ENCODE measurements at regions of chr17 and their contacts with region 1.

Region 1: DNA sequence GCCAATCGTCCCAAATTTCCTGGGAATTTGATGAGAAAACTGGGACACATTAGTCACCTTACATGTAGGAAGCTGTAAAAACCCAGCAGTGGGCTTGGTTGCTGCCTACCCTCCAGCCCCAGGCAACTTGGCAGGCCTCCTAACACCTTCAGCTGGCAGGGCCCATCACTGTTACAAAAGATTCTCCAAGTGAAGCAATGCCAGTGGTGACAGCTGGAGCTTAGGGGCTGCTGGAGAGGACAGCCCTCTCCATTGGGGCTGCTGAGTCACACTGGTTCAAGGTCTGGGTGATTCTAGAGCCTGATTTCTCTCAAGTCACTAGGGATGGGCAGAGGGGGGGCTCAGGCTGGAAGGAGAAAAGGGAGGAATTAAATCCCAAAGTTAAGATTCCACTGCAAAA is 180.6 kb downstream of the COPRS start:
- DNase-seq: peak in 2 of 5 donors; percentile 40 to 41
- ATAC-seq: peak in 3 of 4 donors; percentile 34 to 60 (median 57)
- H3K4me3 ChIP-seq: no peak overlapping the region
- H3K27ac ChIP-seq: no peak overlapping the region
- H3K4me1 ChIP-seq: peaks cover 0 to 10% (median 0%) of the 10 kb centered on the region in 12 donors
- H3K27me3 ChIP-seq: no peaks in the 10 kb centered on the region
- CTCF ChIP-seq: no peak
- POLR2A ChIP-seq: no peak

Region 2: GRCh38 chr17:31452101-31452500 is 226.3 kb before region 1 on chr17:
- intact Hi-C with region 1: no loop called
- DNase-seq: no peak
- ATAC-seq: no peak
- H3K4me3 ChIP-seq: no peak overlapping the region
- H3K27ac ChIP-seq: peak overlapping the region in 1 of 12 donors; percentile 31
- H3K4me1 ChIP-seq: peaks cover 0 to 12% (median 0%) of the 10 kb centered on the region in 12 donors
- H3K27me3 ChIP-seq: no peaks in the 10 kb centered on the region
- CTCF ChIP-seq: no peak
- POLR2A ChIP-seq: no peak

Region 3: DNA sequence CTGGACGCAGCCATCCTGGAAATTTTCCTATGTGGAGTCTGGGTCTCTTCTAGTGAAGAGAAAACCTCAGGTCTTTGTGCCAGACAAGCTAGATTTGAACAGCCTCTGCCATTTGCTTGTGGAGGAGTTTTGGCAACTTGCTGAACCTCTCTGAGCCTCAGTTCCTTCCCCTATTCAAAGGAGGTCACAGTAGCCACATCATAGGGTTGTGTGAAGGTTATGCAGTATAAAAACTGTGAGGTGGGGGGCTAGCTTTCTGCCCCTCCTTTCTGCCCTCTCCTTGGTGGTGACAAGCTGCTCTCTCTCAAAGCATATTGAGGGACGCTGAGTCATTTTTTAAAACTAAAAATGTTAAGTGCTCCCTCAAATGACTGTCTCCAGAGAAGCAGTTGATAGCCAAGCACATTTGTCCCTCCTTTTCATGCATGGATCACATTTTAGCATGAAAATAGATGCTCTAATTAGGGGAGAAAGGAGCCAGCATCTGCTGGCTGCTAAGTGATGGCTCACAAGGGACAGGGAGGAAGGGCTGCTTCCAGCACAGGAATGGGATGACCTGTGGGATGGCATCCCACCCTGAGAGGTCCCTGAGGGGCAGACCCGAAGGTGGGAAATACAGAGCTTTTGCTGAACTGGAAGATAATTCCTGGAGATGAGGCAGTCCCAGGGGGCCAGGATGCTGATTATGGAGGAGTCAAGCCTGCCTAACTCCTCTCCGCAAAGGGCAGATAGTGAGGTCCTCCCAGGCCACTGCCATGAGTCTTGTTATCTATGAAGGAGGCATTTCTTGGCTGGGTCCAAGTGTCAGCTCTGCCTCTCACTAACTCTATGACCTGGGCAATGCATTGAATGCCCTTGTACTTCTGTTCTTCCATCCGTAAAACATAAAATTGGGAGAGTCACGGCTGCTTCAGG is 68.2 kb before region 1 on chr17:
- intact Hi-C with region 1: no loop called
- DNase-seq: no peak
- ATAC-seq: no peak
- H3K4me3 ChIP-seq: no peak overlapping the region
- H3K27ac ChIP-seq: no peak overlapping the region
- H3K4me1 ChIP-seq: no peaks in the 10 kb centered on the region
- H3K27me3 ChIP-seq: no peaks in the 10 kb centered on the region
- CTCF ChIP-seq: no peak
- POLR2A ChIP-seq: no peak

Region 4: DNA sequence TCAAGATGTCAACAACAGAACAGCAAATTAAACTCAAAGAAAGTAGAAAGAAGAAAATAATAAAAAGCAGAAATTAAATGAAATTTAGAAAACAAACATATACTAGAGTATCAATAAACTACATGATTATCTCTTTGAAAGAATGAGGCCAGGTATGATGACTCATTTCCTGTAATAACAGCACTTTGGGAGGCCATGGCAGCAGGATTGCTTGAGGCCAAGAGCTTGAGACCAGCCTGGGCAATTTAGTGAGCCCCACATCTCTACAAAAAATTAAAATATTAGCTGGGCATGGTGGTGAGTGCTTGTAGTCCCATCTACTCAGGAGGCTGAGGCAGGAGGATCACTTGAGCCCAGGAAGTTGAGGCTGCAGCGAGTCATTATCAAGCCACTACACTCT is 54.4 kb before region 1 on chr17:
- intact Hi-C with region 1: no loop called
- DNase-seq: no peak
- ATAC-seq: no peak
- H3K4me3 ChIP-seq: no peak overlapping the region
- H3K27ac ChIP-seq: no peak overlapping the region
- H3K4me1 ChIP-seq: no peaks in the 10 kb centered on the region
- H3K27me3 ChIP-seq: no peaks in the 10 kb centered on the region
- CTCF ChIP-seq: no peak
- POLR2A ChIP-seq: no peak

Region 5: DNA sequence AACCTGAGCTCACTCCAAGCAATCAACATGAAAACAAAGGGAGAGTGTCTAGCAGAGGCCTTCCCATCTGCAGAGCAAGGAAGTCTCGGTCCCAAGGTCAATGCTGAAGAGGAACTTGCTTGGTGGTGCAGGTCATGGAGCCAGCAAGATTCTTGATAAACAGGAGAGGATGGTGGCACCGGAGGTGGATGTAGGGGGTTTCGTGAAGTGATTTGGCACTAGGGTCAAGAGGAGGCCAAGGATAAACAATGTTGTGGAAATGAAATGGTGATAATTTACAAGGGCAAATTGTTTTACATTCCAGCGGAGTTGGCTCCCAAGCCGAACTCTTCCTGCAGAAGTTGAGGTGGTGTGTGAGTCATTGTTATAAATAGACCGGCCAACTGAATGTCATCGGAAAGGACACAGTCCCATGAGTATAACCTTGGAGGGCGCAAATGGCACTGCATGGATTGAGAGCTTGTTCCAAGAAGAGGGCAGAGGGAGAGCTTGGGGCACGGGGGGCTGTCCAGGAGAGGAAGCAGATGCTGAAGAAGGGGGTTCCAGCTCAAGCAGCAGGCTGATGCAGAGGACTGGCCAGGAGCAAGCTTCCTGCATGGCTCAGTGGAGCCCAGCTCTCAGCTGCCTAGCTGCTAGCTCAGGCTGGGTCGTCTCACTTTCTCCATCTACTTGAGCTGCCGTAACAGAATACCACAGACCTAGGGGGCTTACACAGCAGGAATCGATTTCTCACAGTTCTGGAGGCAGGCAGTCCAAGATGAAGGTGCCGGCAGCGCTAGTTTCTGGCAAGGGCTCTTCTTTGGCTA is 44.0 kb after region 1 on chr17:
- intact Hi-C with region 1: no loop called
- DNase-seq: peak in 4 of 5 donors; percentile 48 to 67 (median 58)
- ATAC-seq: peak; percentile 85 to 96 (median 96)
- H3K4me3 ChIP-seq: no peak overlapping the region
- H3K27ac ChIP-seq: peak overlapping the region in 11 of 12 donors; percentile 44 to 82 (median 74)
- H3K4me1 ChIP-seq: peaks cover 3 to 35% (median 19%) of the 10 kb centered on the region in 12 donors
- H3K27me3 ChIP-seq: no peaks in the 10 kb centered on the region
- CTCF ChIP-seq: peak in 1 of 12 donors; percentile 14
- POLR2A ChIP-seq: no peak

Region 6: DNA sequence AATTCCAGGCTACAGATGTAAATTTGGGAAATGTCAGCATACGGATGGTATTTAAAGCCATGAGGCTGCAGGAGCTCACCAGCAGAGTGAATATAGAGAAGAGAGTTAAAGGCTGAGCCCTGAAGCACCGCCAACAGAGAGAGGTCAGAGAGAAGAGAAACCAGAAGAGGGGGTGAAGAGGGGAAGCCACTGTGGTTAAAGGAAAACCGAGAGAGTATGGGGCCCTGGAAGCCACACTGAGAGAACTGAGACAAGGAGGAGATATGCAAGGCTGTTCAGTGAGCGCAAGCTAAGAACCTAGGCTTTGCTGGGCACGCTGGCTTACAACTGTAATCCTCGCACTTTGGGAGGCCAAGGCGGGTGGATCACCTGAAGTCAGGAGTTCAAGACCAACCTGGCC is 156.0 kb after region 1 on chr17:
- intact Hi-C with region 1: loop called in 1 of 10 experiments (anchors 10 kb)
- DNase-seq: no peak
- ATAC-seq: no peak
- H3K4me3 ChIP-seq: no peak overlapping the region
- H3K27ac ChIP-seq: no peak overlapping the region
- H3K4me1 ChIP-seq: peaks cover 0 to 3% (median 0%) of the 10 kb centered on the region in 12 donors
- H3K27me3 ChIP-seq: no peaks in the 10 kb centered on the region
- CTCF ChIP-seq: no peak
- POLR2A ChIP-seq: no peak

Measured in heart left ventricle (tissue), 16 donors.